ENCODE measurements at regions of chr11 and their contacts with region 1.

Region 1: GRCh38 chr11:65575568-65576231 is at the start of gene EHBP1L1:
- DNase-seq: peak; percentile 57 to 78 (median 69)
- H3K4me3 ChIP-seq: peak within 1 kb of the TSS; percentile 23 to 91 (median 74)
- H3K27ac ChIP-seq: peak within 1 kb of the TSS; percentile 19 to 70
- H3K4me1 ChIP-seq: peaks cover 9 to 71% (median 63%) of the 10 kb centered on the region in 4 experiments
- H3K27me3 ChIP-seq: no peaks in the 10 kb centered on the region

Region 2: GRCh38 chr11:65551572-65552398 is 23.9 kb before region 1 on chr11:
- CTCF ChIA-PET with region 1: interaction called, 262 read pairs
- POLR2A ChIA-PET with region 1: interaction called, 3 read pairs
- DNase-seq: peak; percentile 49 to 87 (median 81)
- H3K4me3 ChIP-seq: no peak overlapping the region
- H3K27ac ChIP-seq: no peak overlapping the region
- H3K4me1 ChIP-seq: peaks cover 2 to 78% (median 71%) of the 10 kb centered on the region in 4 experiments
- H3K27me3 ChIP-seq: no peaks in the 10 kb centered on the region

Region 3: GRCh38 chr11:65692367-65692766 is 116.7 kb after region 1 on chr11:
- CTCF ChIA-PET with region 1: no interaction called
- POLR2A ChIA-PET with region 1: no interaction called
- DNase-seq: peak in 1 of 3 donors; percentile 32
- H3K4me3 ChIP-seq: no peak overlapping the region
- H3K27ac ChIP-seq: no peak overlapping the region
- H3K4me1 ChIP-seq: peaks cover 0 to 3% (median 0%) of the 10 kb centered on the region in 4 experiments
- H3K27me3 ChIP-seq: no peaks in the 10 kb centered on the region